ENCODE measurements at regions of chr4 and their contacts with region 1.

Region 1: DNA sequence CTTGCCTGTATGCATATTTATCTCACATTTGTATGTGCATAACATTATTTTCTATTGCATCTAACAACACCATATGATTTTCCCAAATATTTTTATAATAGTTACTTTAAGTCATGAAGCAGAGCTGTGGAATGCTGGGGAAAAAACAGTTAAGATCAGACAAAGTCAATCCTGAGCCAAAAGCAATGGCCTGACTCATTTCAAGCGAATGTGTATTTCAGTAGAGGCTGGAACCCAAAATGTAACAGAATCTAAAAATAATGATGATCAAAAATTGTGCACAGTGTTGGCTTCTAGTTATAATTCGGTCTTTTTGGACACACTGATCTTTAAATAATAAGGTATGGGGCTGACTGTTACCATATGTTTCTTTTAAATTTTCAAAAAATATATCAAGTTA is 516.2 kb upstream of the ADGRL3 start:
- DNase-seq: no peak
- ATAC-seq: peak; percentile 79
- H3K4me3 ChIP-seq: no peak overlapping the region
- H3K27ac ChIP-seq: no peak overlapping the region
- H3K4me1 ChIP-seq: peaks cover 0 to 2% of the 10 kb centered on the region in 2 donors
- H3K27me3 ChIP-seq: no peaks in the 10 kb centered on the region

Region 2: GRCh38 chr4:59960143-59960542 is 723.8 kb before region 1 on chr4:
- intact Hi-C with region 1: no loop called
- DNase-seq: no peak
- ATAC-seq: no peak
- H3K4me3 ChIP-seq: no peak overlapping the region
- H3K27ac ChIP-seq: no peak overlapping the region
- H3K4me1 ChIP-seq: no peaks in the 10 kb centered on the region
- H3K27me3 ChIP-seq: no peaks in the 10 kb centered on the region

Region 3: GRCh38 chr4:60724623-60725022 is 40.6 kb after region 1 on chr4:
- intact Hi-C with region 1: loop called in 1 of 2 experiments (anchors 2 kb)
- DNase-seq: no peak
- ATAC-seq: peak; percentile 64
- H3K4me3 ChIP-seq: no peak overlapping the region
- H3K27ac ChIP-seq: peak overlapping the region; percentile 40 to 93
- H3K4me1 ChIP-seq: peaks cover 0 to 3% of the 10 kb centered on the region in 2 donors
- H3K27me3 ChIP-seq: no peaks in the 10 kb centered on the region

Region 4: DNA sequence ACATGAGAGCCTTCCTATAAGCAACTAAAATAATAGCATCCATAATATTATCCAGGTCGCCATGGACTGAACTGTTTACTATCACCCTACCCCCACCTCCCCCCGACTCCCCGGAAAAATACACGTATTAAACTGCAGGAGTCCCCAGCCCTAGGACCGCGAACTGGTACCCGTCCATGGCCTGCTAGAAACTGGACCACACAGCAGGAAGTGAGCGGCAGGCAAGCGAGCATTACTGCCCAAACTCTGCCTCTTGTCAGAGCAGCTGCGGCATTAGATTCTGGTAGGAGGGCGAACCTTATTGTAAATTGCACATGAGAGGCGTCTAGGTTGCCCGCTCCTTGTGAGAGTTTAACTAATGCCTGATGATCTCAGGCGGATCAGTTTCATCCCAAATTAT is 110.4 kb after region 1 on chr4:
- intact Hi-C with region 1: loop called in 1 of 2 experiments (anchors 10 kb)
- DNase-seq: peak in 1 of 2 donors; percentile 43
- ATAC-seq: no peak
- H3K4me3 ChIP-seq: peak overlapping the region; percentile 16 to 49
- H3K27ac ChIP-seq: peak overlapping the region; percentile 45 to 55
- H3K4me1 ChIP-seq: peaks cover 0 to 9% of the 10 kb centered on the region in 2 donors
- H3K27me3 ChIP-seq: no peaks in the 10 kb centered on the region

Measured in aorta (tissue), 5 donors.